Naive thymus-derived CD8-positive, alpha-beta T cell (primary cell): ENCODE measurements at regions of chr22 and their contacts with region 1.

Region 1: GRCh38 chr22:23138584-23139435 is 3.0 kb downstream of the RSPH14 start:
- DNase-seq: no peak
- ATAC-seq: no peak
- H3K4me3 Mint-ChIP-seq: peak overlapping the region in 8 of 10 donors; percentile 64 to 85 (median 76)
- H3K27ac Mint-ChIP-seq: peak overlapping the region; percentile 93 to 98 (median 96)
- H3K4me1 Mint-ChIP-seq: peaks cover 18 to 80% (median 59%) of the 10 kb centered on the region in 4 donors
- H3K27me3 Mint-ChIP-seq: no peaks in the 10 kb centered on the region

Region 2: GRCh38 chr22:23088199-23088604 is 50.6 kb before region 1 on chr22:
- POLR2A ChIA-PET with region 1: no interaction called
- DNase-seq: no peak
- ATAC-seq: no peak
- H3K4me3 Mint-ChIP-seq: no peak overlapping the region
- H3K27ac Mint-ChIP-seq: no peak overlapping the region
- H3K4me1 Mint-ChIP-seq: peaks cover 0 to 25% (median 3%) of the 10 kb centered on the region in 4 donors
- H3K27me3 Mint-ChIP-seq: peaks cover 0 to 7% (median 0%) of the 10 kb centered on the region in 5 donors

Region 3: GRCh38 chr22:23119494-23120414 is 19.1 kb before region 1 on chr22:
- POLR2A ChIA-PET with region 1: interaction called, 12 read pairs
- DNase-seq: peak in 9 of 10 donors; percentile 26 to 71 (median 56)
- ATAC-seq: peak; percentile 92 to 99
- H3K4me3 Mint-ChIP-seq: peak overlapping the region; percentile 38 to 83 (median 56)
- H3K27ac Mint-ChIP-seq: peak overlapping the region; percentile 85 to 98 (median 96)
- H3K4me1 Mint-ChIP-seq: peaks cover 11 to 19% (median 15%) of the 10 kb centered on the region in 4 donors
- H3K27me3 Mint-ChIP-seq: no peaks in the 10 kb centered on the region

Region 4: DNA sequence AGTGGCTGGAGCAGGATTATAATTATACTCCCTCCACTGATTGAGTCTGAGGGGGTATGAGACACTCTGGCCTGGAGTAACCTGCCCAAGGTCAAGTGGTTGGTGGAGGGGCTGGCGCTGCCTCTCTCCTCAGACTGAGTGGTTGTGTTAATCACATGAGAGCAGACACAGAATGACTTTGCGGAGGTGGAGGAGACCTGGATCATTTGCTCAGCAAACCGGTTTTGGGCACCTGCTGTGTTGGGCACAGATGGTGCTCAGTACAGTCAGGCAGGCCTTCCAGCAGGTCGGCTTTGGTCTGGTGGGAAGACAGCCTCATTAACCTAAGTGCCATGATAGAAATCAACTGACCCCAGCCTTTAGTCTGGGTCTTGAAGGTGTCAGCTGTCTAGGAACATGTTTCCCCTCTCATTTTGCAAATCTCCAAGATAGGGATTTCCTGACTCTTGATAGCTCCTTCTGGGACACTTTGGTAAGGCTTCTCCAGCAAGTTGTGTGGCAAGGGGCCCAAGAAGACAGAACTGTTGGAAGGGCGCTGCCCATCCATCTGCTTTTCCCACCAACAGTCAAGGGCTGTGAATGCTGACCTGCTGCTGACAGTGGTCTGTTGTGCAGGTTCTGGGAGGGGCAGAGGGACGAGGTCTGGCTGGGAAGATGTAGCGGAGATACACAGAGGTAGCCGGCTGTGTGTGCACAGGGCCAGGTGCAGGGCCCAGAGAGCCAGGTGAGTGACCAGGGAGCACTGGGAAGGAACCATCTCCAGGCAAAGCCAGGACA is 53.6 kb after region 1 on chr22:
- POLR2A ChIA-PET with region 1: no interaction called
- DNase-seq: no peak
- ATAC-seq: no peak
- H3K4me3 Mint-ChIP-seq: no peak overlapping the region
- H3K27ac Mint-ChIP-seq: peak overlapping the region in 7 of 10 donors; percentile 30 to 80 (median 53)
- H3K4me1 Mint-ChIP-seq: peaks cover 35 to 60% (median 57%) of the 10 kb centered on the region in 4 donors
- H3K27me3 Mint-ChIP-seq: no peaks in the 10 kb centered on the region